SK-N-SH (cell line): ENCODE measurements at regions of chr7 and their contacts with region 1.

Region 1: GRCh38 chr7:143380255-143380645 is 895 bp upstream of the ZYX start:
- DNase-seq: peak; percentile 90
- H3K4me3 ChIP-seq: peak overlapping the region; percentile 79 to 99
- H3K27ac ChIP-seq: peak overlapping the region; percentile 91 to 100
- H3K4me1 ChIP-seq: peaks cover 20 to 50% of the 10 kb centered on the region in 2 experiments; a peak in 3 of 4 replicates
- H3K27me3 ChIP-seq: no peaks in the 10 kb centered on the region
- CTCF ChIP-seq: peak; percentile 99
- EP300 ChIP-seq: no peak
- RAD21 ChIP-seq: peak; percentile 46

Region 2: GRCh38 chr7:143248761-143249354 is 131.4 kb before region 1 on chr7:
- CTCF ChIA-PET with region 1: no interaction called
- POLR2A ChIA-PET with region 1: no interaction called
- DNase-seq: no peak
- H3K4me3 ChIP-seq: no peak overlapping the region
- H3K27ac ChIP-seq: no peak overlapping the region
- H3K4me1 ChIP-seq: peaks cover 0 to 3% of the 10 kb centered on the region in 2 experiments; a peak in 1 of 4 replicates
- H3K27me3 ChIP-seq: no peaks in the 10 kb centered on the region
- CTCF ChIP-seq: no peak
- EP300 ChIP-seq: no peak
- RAD21 ChIP-seq: no peak

Region 3: GRCh38 chr7:143263266-143264195 is 116.7 kb before region 1 on chr7 and contains the start of gene GSTK1:
- CTCF ChIA-PET with region 1: interaction called, 14 read pairs
- POLR2A ChIA-PET with region 1: interaction called, 4 read pairs
- DNase-seq: peak; percentile 94
- H3K4me3 ChIP-seq: peak within 1 kb of the TSS; percentile 76 to 96
- H3K27ac ChIP-seq: peak within 1 kb of the TSS; percentile 54 to 79; a peak in 3 of 4 replicates
- H3K4me1 ChIP-seq: peaks cover 7 to 12% of the 10 kb centered on the region in 2 experiments; a peak in 2 of 4 replicates
- H3K27me3 ChIP-seq: no peaks in the 10 kb centered on the region
- CTCF ChIP-seq: 0 out of 2 replicates have a peak, but pooled peaks have one; percentile 8
- EP300 ChIP-seq: no peak
- RAD21 ChIP-seq: no peak
- polyA plus RNA-seq, gene GSTK1: 299 and 354 TPM in 2 replicates

Region 4: DNA sequence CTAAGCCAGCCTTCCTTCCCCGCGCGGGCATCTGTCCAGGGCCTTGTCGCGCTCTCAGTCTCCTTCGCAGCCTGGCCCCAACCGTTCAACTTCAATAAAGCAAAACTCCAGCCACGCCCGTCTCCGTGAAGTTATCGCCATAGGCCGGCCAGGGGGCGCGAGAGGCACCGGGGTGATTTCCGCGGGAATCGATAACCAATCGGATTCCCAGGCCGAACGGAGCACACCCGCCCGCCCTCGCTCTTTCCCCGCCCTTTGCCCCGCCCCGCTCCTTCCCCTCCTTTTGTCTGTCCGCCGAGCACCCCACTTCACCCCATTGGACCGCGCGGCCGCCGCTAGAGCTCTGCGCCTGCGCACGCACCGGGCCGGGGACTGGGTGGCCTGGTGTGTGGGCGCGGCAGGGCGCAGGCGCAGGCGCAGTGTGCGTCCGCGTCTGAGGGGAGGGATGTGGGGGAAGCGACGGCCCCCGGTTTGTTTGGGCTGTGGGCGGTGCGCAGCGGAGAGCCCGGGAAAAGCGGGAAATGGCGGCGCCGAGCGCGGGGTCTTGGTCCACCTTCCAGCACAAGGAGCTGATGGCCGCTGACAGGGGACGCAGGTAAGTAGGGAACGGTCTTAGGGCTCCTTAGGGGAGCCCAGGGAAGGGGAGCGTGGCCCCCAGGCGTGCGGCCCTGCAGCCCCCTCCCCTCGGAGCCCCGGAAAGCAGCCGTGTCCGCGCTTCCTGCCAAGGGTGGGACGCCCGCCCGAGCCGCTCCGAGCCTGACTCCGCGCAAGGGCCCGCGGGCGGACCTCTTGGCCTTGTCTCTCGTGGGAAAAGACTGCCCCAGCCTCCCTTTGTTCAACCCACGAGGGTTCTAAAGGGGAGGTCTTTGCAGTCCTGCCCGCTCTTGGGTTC is 92.1 kb before region 1 on chr7 and contains the start of gene CASP2:
- CTCF ChIA-PET with region 1: interaction called, 10 read pairs
- POLR2A ChIA-PET with region 1: interaction called, 4 read pairs
- DNase-seq: peak; percentile 100
- H3K4me3 ChIP-seq: peak within 1 kb of the TSS; percentile 73 to 86
- H3K27ac ChIP-seq: peak within 1 kb of the TSS; percentile 69 to 89
- H3K4me1 ChIP-seq: peaks cover 15 to 26% of the 10 kb centered on the region in 2 experiments; a peak in 3 of 4 replicates
- H3K27me3 ChIP-seq: no peaks in the 10 kb centered on the region
- CTCF ChIP-seq: peak; percentile 47
- EP300 ChIP-seq: no peak
- RAD21 ChIP-seq: no peak
- polyA plus RNA-seq, gene CASP2: 19.7 and 22.3 TPM in 2 replicates

Region 5: GRCh38 chr7:143362131-143363015 is 17.9 kb before region 1 on chr7 and contains the start of gene FAM131B:
- CTCF ChIA-PET with region 1: interaction called, 13 read pairs
- POLR2A ChIA-PET with region 1: interaction called, 5 read pairs
- DNase-seq: peak; percentile 91
- H3K4me3 ChIP-seq: peak within 1 kb of the TSS; percentile 73 to 82
- H3K27ac ChIP-seq: no peak within 1 kb of the TSS
- H3K4me1 ChIP-seq: peaks cover 0 to 8% of the 10 kb centered on the region in 2 experiments; a peak in 1 of 4 replicates
- H3K27me3 ChIP-seq: no peaks in the 10 kb centered on the region
- CTCF ChIP-seq: no peak
- EP300 ChIP-seq: no peak
- RAD21 ChIP-seq: no peak
- polyA plus RNA-seq, gene FAM131B: 43.6 and 50.1 TPM in 2 replicates

Region 6: GRCh38 chr7:143391462-143392404 is 11.5 kb after region 1 on chr7:
- CTCF ChIA-PET with region 1: interaction called, 38 read pairs
- POLR2A ChIA-PET with region 1: interaction called, 3 read pairs
- DNase-seq: no peak
- H3K4me3 ChIP-seq: no peak overlapping the region
- H3K27ac ChIP-seq: peak overlapping the region; percentile 61 to 75
- H3K4me1 ChIP-seq: peaks cover 10 to 38% of the 10 kb centered on the region in 2 experiments; a peak in 3 of 4 replicates
- H3K27me3 ChIP-seq: no peaks in the 10 kb centered on the region
- CTCF ChIP-seq: no peak
- EP300 ChIP-seq: 0 out of 4 replicates have a peak, but pooled peaks of 1 of the 2 experiments have one; percentile 12
- RAD21 ChIP-seq: no peak

Region 7: DNA sequence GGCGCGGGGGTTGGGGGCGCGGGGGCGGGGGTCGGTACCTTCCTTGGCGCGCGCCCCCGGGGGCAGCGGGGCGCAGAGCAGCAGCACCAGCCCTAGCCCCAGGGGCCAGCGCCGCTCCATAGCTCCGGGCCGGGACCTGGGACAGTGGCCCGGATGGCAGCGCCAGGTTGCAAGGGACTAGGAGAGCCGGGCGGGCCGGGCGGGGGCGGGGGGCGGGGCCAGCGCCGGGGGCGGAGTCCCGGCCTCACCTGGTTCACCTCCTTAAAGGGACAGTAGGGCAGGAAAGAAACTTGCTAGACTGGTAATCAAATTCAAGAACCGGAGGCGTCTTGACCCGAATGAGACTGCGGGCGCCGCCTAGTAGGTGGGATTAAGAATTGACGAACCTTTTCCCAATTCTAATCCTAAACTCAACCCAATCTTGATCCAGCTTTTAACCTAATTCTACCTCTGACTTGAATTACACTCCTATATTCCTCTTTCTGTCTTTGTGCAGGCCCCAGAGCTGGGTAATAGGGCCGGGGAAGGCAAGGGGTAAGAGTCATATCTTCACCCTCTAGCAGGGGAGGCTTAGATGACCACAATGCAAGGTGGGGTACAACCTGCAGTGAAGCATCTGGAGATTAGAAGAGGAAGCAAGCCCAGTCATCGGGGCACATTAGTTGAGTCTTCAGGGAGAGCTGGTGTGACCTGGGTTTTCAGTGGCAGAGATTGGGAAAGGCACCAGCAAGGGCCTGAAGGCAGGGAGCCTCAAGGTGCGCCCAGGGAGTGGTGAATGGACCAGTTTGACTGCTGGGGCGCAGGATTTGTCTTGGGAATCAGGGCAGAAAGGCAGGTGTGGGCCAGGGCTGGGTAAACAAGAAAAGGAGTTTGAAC is 28.7 kb after region 1 on chr7 and contains the start of gene EPHA1:
- CTCF ChIA-PET with region 1: interaction called, 14 read pairs
- POLR2A ChIA-PET with region 1: no interaction called
- DNase-seq: no peak
- H3K4me3 ChIP-seq: no peak within 1 kb of the TSS
- H3K27ac ChIP-seq: no peak within 1 kb of the TSS
- H3K4me1 ChIP-seq: peaks cover 4 to 23% of the 10 kb centered on the region in 2 experiments; a peak in 3 of 4 replicates
- H3K27me3 ChIP-seq: no peaks in the 10 kb centered on the region
- CTCF ChIP-seq: no peak
- EP300 ChIP-seq: no peak
- RAD21 ChIP-seq: no peak
- polyA plus RNA-seq, gene EPHA1: 0.26 and 0.49 TPM in 2 replicates

Region 8: GRCh38 chr7:143416565-143417149 is 36.4 kb after region 1 on chr7:
- CTCF ChIA-PET with region 1: interaction called, 50 read pairs
- POLR2A ChIA-PET with region 1: no interaction called
- DNase-seq: peak; percentile 82
- H3K4me3 ChIP-seq: no peak overlapping the region
- H3K27ac ChIP-seq: peak overlapping the region in 1 of 2 experiments; percentile 76; a peak in 2 of 4 replicates
- H3K4me1 ChIP-seq: peaks cover 0 to 12% of the 10 kb centered on the region in 2 experiments; a peak in 2 of 4 replicates
- H3K27me3 ChIP-seq: no peaks in the 10 kb centered on the region
- CTCF ChIP-seq: peak; percentile 98
- EP300 ChIP-seq: no peak
- RAD21 ChIP-seq: peak; percentile 90

Region 9: GRCh38 chr7:143434660-143435059 is 54.4 kb after region 1 on chr7:
- CTCF ChIA-PET with region 1: no interaction called
- POLR2A ChIA-PET with region 1: no interaction called
- DNase-seq: no peak
- H3K4me3 ChIP-seq: no peak overlapping the region
- H3K27ac ChIP-seq: no peak overlapping the region
- H3K4me1 ChIP-seq: peaks cover 0 to 18% of the 10 kb centered on the region in 2 experiments; a peak in 2 of 4 replicates
- H3K27me3 ChIP-seq: no peaks in the 10 kb centered on the region
- CTCF ChIP-seq: no peak
- EP300 ChIP-seq: no peak
- RAD21 ChIP-seq: no peak